Activated CD8-positive, alpha-beta T cell treated with anti-CD3 and anti-CD28 coated beads, Interleukin-2, amount 10 ng/mL, durations not matched to agents 7 days and 5 days (primary cell): ENCODE measurements at regions of chr6 and their contacts with region 1.

Region 1: GRCh38 chr6:5012519-5012918 is 8.7 kb upstream of the RPP40 start:
- DNase-seq: no peak
- ATAC-seq: no peak
- H3K4me3 Mint-ChIP-seq: no peak overlapping the region
- H3K27ac Mint-ChIP-seq: no peak overlapping the region
- H3K4me1 Mint-ChIP-seq: no peaks in the 10 kb centered on the region
- H3K27me3 Mint-ChIP-seq: peaks cover 1% of the 10 kb centered on the region

Region 2: DNA sequence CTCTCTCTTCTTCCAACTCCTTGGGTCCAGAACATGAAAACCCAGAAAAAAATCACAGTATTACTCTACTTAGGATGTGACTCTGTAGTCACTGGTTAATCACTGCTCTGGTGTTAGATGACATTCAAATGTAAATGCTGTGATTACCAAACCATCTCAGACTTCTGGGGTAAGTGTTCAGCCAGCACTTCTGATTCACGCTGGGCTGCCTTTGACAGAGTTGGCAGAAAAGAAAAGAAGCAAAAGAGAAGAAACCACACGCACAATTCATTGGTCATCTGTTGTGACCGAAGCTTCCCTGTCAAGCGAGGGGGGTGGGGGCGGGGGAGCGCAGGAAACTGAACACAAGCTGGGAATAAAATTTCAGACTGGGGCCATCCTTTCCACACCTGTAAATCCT is 1671.1 kb before region 1 on chr6:
- CTCF ChIA-PET with region 1: no interaction called
- POLR2A ChIA-PET with region 1: no interaction called
- DNase-seq: no peak
- ATAC-seq: no peak
- H3K4me3 Mint-ChIP-seq: no peak overlapping the region
- H3K27ac Mint-ChIP-seq: no peak overlapping the region
- H3K4me1 Mint-ChIP-seq: peaks cover 10% of the 10 kb centered on the region
- H3K27me3 Mint-ChIP-seq: peaks cover 1% of the 10 kb centered on the region

Region 3: DNA sequence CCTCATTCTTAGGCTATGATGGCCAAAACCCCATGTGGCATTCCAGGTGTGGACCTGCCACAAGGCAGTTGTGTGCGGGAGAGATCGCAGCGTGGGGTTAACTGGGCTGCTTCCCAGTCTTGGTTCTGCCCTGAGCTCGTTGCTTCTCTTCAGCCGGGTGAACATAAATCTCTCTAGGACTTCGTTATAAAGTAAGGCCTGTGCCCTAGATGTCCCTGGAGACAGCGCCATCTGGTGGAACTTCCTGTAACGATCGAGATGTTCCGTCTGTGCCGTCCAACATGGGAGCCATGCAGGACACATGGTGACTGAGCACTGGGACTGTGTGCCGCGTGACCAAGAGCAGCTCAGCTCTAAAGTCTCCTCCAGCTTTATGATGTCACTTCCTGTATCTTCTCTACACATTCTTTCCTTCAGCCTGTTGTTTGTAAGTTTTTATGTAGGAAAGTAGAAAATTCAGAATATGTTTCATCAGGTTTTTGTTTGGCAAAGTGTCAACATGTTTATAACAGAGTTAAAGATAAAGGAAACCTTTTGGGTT is 18.1 kb after region 1 on chr6:
- CTCF ChIA-PET with region 1: interaction called, 13 read pairs
- POLR2A ChIA-PET with region 1: no interaction called
- DNase-seq: peak; percentile 84
- ATAC-seq: peak; percentile 94
- H3K4me3 Mint-ChIP-seq: no peak overlapping the region
- H3K27ac Mint-ChIP-seq: no peak overlapping the region
- H3K4me1 Mint-ChIP-seq: peaks cover 16% of the 10 kb centered on the region
- H3K27me3 Mint-ChIP-seq: peaks cover 3% of the 10 kb centered on the region